ENCODE measurements at regions of chr2 and their contacts with region 1.

Region 1: DNA sequence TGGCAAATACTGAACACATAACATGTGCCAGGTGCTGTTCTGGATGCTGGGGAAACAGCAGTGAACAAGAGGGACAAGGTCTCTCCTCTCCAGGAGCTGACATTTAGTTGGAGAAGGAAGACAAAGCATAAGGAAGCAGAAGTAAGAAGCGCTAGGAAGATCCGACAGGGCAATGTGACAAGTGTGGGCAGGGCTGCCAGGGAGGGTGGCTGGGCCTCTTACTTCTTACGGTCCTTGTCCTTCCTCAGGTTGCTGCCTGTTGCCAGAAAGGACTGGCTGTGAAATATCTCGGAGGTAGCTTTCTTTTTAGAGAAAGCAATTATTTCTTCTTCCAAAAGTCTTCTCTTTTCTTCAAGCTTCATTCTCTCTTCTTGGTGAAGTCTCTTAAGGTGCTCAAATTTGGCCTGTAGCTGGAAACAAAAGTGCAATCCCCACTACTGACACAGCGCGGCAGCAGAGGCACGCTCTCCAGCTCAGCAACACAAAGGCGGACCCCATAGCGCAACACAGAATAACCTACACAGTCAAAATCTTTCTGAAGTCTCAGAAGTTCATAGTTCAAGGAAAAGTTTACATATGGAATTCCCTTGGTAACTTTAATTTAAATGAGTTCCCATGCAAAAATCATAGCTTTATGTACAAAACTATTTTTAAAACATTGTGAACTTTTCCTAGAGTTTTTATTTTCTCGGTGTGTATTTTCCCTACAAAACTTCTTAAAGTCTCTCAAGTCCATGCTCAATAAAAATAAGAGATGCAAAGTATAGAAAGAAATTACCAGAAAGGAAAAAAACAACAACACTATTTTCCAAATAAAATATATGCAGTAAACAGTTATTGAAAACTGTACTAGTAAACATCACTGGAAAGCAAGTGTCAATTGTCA is 67.7 kb downstream of the SEPTIN10 start:
- DNase-seq: peak; percentile 59
- H3K4me3 ChIP-seq: no peak overlapping the region; a peak in 1 of 4 replicates
- H3K27ac ChIP-seq: no peak overlapping the region
- H3K4me1 ChIP-seq: peaks cover 0 to 4% of the 10 kb centered on the region in 2 experiments; a peak in 3 of 4 replicates
- H3K27me3 ChIP-seq: no peaks in the 10 kb centered on the region
- CTCF ChIP-seq: peak; percentile 98
- EP300 ChIP-seq: no peak
- RAD21 ChIP-seq: peak; percentile 92

Region 2: DNA sequence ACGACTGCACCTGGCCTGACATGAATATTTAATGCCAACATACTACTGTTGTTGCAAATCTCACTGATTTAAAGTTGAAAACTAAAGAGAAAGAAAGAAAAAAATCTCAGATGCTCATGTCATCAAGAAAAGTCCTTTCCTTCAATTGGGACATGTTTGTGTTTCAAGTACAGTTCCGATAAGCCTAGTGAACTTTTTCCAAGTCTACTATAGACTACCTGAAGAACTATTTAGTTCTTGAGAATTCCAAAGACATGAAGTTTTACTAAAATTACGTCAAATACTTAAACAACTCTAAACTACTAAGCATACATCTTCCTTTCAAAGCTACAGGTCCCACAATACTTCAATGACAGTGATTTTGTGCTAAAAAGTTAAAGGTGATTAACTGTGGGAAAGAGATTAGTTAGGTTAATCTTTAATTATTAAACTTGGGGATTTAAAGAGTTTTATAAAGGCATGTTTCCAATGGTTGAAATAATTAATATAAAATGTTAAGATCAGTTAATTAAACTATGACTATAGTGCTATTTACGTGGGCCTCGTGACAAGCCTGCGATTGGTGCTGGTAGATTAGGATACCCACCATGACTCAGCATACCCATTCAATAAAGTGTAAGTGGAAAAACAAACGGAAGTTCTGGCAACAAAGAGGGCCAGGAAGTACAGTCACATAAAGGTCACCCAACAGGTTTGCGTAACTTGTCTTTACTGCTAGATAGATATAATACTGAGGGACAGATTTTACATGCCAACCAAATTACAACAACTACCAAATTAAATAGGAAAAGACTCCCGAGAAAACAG is 12.2 kb after region 1 on chr2:
- CTCF ChIA-PET with region 1: interaction called, 38 read pairs
- POLR2A ChIA-PET with region 1: no interaction called
- DNase-seq: no peak
- H3K4me3 ChIP-seq: no peak overlapping the region
- H3K27ac ChIP-seq: peak overlapping the region in 1 of 2 experiments; percentile 57; a peak in 2 of 4 replicates
- H3K4me1 ChIP-seq: peaks cover 0 to 16% of the 10 kb centered on the region in 2 experiments; a peak in 1 of 4 replicates
- H3K27me3 ChIP-seq: no peaks in the 10 kb centered on the region
- CTCF ChIP-seq: no peak
- EP300 ChIP-seq: peak in 1 of 2 experiments; percentile 56; a peak in 1 of 4 replicates
- RAD21 ChIP-seq: no peak

Region 3: DNA sequence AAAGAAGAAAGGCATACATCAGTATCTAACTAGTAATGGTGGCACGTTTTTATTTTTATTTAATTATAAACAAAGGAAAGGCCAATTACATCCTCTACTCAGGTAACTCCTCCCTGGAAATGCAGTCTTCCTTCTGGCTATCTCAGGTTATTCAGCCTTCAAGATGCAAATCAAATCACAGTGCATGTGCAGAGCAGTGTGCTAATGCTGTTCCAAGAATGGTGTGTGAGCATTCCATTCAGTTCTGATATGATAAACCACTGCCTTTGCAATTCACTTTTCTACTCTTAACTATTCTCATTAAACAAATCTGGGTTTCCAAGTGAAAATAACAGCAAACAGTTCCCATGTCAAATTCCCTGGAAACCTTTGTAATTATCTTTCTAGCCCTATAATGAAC is 29.3 kb after region 1 on chr2:
- CTCF ChIA-PET with region 1: interaction called, 24 read pairs
- POLR2A ChIA-PET with region 1: no interaction called
- DNase-seq: no peak
- H3K4me3 ChIP-seq: no peak overlapping the region
- H3K27ac ChIP-seq: no peak overlapping the region
- H3K4me1 ChIP-seq: no peaks in the 10 kb centered on the region
- H3K27me3 ChIP-seq: no peaks in the 10 kb centered on the region
- CTCF ChIP-seq: no peak
- EP300 ChIP-seq: no peak
- RAD21 ChIP-seq: no peak

Region 4: GRCh38 chr2:109663721-109664120 is 117.7 kb after region 1 on chr2:
- CTCF ChIA-PET with region 1: interaction called, 15 read pairs
- POLR2A ChIA-PET with region 1: no interaction called
- DNase-seq: peak; percentile 53
- H3K4me3 ChIP-seq: no peak overlapping the region
- H3K27ac ChIP-seq: peak overlapping the region in 1 of 2 experiments; percentile 60; a peak in 2 of 4 replicates
- H3K4me1 ChIP-seq: peaks cover 0 to 20% of the 10 kb centered on the region in 2 experiments; a peak in 2 of 4 replicates
- H3K27me3 ChIP-seq: no peaks in the 10 kb centered on the region
- CTCF ChIP-seq: no peak
- EP300 ChIP-seq: no peak
- RAD21 ChIP-seq: no peak

Region 5: DNA sequence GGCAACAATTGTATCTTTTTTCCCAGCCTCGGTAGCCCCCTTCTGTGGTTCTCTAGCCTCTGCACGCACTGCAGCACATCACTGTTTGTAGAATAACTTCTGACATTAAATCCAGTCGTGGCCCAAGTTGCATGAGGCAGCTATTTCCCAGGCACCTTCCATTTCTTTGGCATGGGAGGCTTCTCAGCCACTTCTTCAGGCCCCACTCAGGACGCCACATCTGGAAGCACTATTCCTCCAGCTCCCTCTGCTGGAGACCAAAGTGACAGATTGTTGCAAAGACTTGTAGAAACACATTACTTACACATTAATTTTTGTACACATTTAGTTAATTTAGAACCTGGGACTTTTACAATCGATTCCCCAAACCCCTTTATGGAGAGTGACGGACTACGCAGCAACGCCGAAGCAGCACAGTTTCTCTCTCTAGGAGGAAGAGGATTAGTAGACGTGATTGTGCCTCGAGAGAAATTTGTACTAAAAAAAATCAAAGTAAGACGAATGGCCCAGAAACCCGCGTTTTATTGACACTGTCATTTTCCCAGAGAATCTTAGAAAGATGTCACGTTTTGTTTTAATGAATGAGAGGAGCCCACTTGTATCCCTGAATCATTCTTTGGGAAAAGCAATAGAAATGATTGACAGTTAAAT is 190.2 kb after region 1 on chr2:
- CTCF ChIA-PET with region 1: interaction called, 93 read pairs
- POLR2A ChIA-PET with region 1: no interaction called
- DNase-seq: peak; percentile 60
- H3K4me3 ChIP-seq: no peak overlapping the region; a peak in 1 of 4 replicates
- H3K27ac ChIP-seq: no peak overlapping the region
- H3K4me1 ChIP-seq: no peaks in the 10 kb centered on the region
- H3K27me3 ChIP-seq: no peaks in the 10 kb centered on the region
- CTCF ChIP-seq: peak; percentile 83
- EP300 ChIP-seq: no peak
- RAD21 ChIP-seq: peak; percentile 86